ENCODE measurements at regions of chr7 and their contacts with region 1.

Region 1: DNA sequence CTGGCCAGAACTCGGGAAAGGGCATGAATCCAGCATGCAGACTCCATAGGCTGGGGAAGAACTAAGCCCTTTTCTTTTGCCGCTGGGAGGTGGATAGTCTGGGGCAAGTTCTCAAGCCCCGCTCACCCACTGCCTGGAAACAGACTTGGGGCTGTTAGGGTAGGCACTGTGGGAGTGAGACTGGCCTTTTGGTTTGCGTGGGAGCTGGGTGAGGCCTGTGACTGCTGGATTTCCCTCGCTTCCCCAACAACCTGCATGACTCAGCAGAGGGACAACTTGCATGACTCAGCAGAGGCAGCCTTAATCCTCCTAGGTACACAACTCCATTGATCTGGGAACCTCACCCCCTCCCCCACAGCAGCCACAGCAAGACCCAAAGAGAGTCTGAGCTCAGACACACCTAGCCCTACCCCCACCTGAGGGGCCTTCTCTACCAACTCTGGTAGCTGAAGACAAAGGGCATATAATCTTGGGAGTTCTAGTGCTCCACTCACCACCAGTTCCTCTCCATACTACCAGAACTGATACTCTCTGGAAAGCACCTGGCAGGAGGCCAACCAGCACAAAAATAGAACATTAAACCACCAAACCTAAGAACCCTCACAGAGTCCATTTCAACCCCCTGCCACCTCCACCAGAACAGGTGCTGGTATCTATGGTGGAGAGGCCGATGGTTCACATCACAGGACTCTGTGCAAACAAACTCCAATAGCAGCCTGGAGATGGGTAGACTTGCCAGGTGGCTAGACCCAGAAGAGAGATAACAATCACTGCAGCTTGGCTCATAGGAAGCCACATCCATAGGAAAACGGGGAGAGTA is 81.4 kb upstream of the LAMB4 start:
- DNase-seq: peak; percentile 25
- H3K4me3 ChIP-seq: no peak overlapping the region
- H3K27ac ChIP-seq: no peak overlapping the region
- H3K4me1 ChIP-seq: no peaks in the 10 kb centered on the region
- H3K27me3 ChIP-seq: no peaks in the 10 kb centered on the region
- CTCF ChIP-seq: no peak
- EP300 ChIP-seq: no peak
- POLR2A ChIP-seq: no peak

Region 2: GRCh38 chr7:108452722-108453121 is 241.1 kb after region 1 on chr7:
- in situ Hi-C with region 1: no loop called
- intact Hi-C with region 1: no loop called
- DNase-seq: no peak
- H3K4me3 ChIP-seq: no peak overlapping the region
- H3K27ac ChIP-seq: no peak overlapping the region
- H3K4me1 ChIP-seq: peaks cover 3 to 22% (median 16%) of the 10 kb centered on the region in 4 donors
- H3K27me3 ChIP-seq: peaks cover 54% of the 10 kb centered on the region
- CTCF ChIP-seq: peak in 2 of 5 experiments; percentile 25 to 26
- EP300 ChIP-seq: no peak
- POLR2A ChIP-seq: no peak

Region 3: GRCh38 chr7:109964780-109965179 is 1753.2 kb after region 1 on chr7:
- in situ Hi-C with region 1: no loop called
- intact Hi-C with region 1: loop called (anchors 5 kb)
- DNase-seq: no peak
- H3K4me3 ChIP-seq: no peak overlapping the region
- H3K27ac ChIP-seq: no peak overlapping the region
- H3K4me1 ChIP-seq: no peaks in the 10 kb centered on the region
- H3K27me3 ChIP-seq: no peaks in the 10 kb centered on the region
- CTCF ChIP-seq: no peak
- EP300 ChIP-seq: no peak
- POLR2A ChIP-seq: no peak